Caco-2 (cell line): ENCODE measurements at regions of chr10 and their contacts with region 1.

Region 1: GRCh38 chr10:77485847-77486246 is 151.8 kb downstream of the KCNMA1 start:
- DNase-seq: peak; percentile 67 to 70
- H3K4me3 ChIP-seq: no peak overlapping the region
- H3K4me3 Mint-ChIP-seq: no peak overlapping the region
- H3K27ac Mint-ChIP-seq: no peak overlapping the region
- H3K4me1 ChIP-seq: peaks cover 23% of the 10 kb centered on the region
- H3K4me1 Mint-ChIP-seq: peaks cover 14% of the 10 kb centered on the region
- H3K27me3 ChIP-seq: no peaks in the 10 kb centered on the region
- H3K27me3 Mint-ChIP-seq: no peaks in the 10 kb centered on the region
- CTCF ChIP-seq: no peak

Region 2: GRCh38 chr10:77377678-77378352 is 108.0 kb before region 1 on chr10:
- CTCF ChIA-PET with region 1: interaction called, 3 read pairs
- POLR2A ChIA-PET with region 1: no interaction called
- intact Hi-C with region 1: loop called (anchors 5 kb)
- DNase-seq: peak; percentile 56 to 64
- H3K4me3 ChIP-seq: no peak overlapping the region
- H3K4me3 Mint-ChIP-seq: no peak overlapping the region
- H3K27ac Mint-ChIP-seq: peak overlapping the region; percentile 9
- H3K4me1 ChIP-seq: peaks cover 16% of the 10 kb centered on the region
- H3K4me1 Mint-ChIP-seq: no peaks in the 10 kb centered on the region
- H3K27me3 ChIP-seq: no peaks in the 10 kb centered on the region
- H3K27me3 Mint-ChIP-seq: no peaks in the 10 kb centered on the region
- CTCF ChIP-seq: peak; percentile 43 to 69

Region 3: GRCh38 chr10:77431209-77431611 is 54.6 kb before region 1 on chr10:
- CTCF ChIA-PET with region 1: interaction called, 4 read pairs
- POLR2A ChIA-PET with region 1: no interaction called
- intact Hi-C with region 1: loop called (anchors 1 kb)
- DNase-seq: peak; percentile 90 to 94
- H3K4me3 ChIP-seq: no peak overlapping the region
- H3K4me3 Mint-ChIP-seq: peak overlapping the region; percentile 47
- H3K27ac Mint-ChIP-seq: peak overlapping the region; percentile 92
- H3K4me1 ChIP-seq: peaks cover 62% of the 10 kb centered on the region
- H3K4me1 Mint-ChIP-seq: peaks cover 66% of the 10 kb centered on the region
- H3K27me3 ChIP-seq: no peaks in the 10 kb centered on the region
- H3K27me3 Mint-ChIP-seq: no peaks in the 10 kb centered on the region
- CTCF ChIP-seq: peak in 1 of 2 experiments; percentile 75

Region 4: GRCh38 chr10:77513781-77514331 is 28.0 kb after region 1 on chr10:
- CTCF ChIA-PET with region 1: no interaction called
- POLR2A ChIA-PET with region 1: no interaction called
- intact Hi-C with region 1: loop called (anchors 2 kb)
- DNase-seq: no peak
- H3K4me3 ChIP-seq: no peak overlapping the region
- H3K4me3 Mint-ChIP-seq: no peak overlapping the region
- H3K27ac Mint-ChIP-seq: no peak overlapping the region
- H3K4me1 ChIP-seq: peaks cover 29% of the 10 kb centered on the region
- H3K4me1 Mint-ChIP-seq: peaks cover 42% of the 10 kb centered on the region
- H3K27me3 ChIP-seq: no peaks in the 10 kb centered on the region
- H3K27me3 Mint-ChIP-seq: no peaks in the 10 kb centered on the region
- CTCF ChIP-seq: no peak